ENCODE measurements at regions of chr11 and their contacts with region 1.

Region 1: GRCh38 chr11:5767056-5767455 is 13.0 kb downstream of the OR52N4 start:
- DNase-seq: no peak
- ATAC-seq: no peak
- H3K4me3 ChIP-seq: no peak overlapping the region
- H3K4me3 Mint-ChIP-seq: no peak overlapping the region
- H3K27ac ChIP-seq: no peak overlapping the region
- H3K27ac Mint-ChIP-seq: no peak overlapping the region
- H3K4me1 ChIP-seq: no peaks in the 10 kb centered on the region
- H3K4me1 Mint-ChIP-seq: no peaks in the 10 kb centered on the region
- H3K27me3 ChIP-seq: no peaks in the 10 kb centered on the region
- H3K27me3 Mint-ChIP-seq: no peaks in the 10 kb centered on the region
- CTCF ChIP-seq: no peak

Region 2: DNA sequence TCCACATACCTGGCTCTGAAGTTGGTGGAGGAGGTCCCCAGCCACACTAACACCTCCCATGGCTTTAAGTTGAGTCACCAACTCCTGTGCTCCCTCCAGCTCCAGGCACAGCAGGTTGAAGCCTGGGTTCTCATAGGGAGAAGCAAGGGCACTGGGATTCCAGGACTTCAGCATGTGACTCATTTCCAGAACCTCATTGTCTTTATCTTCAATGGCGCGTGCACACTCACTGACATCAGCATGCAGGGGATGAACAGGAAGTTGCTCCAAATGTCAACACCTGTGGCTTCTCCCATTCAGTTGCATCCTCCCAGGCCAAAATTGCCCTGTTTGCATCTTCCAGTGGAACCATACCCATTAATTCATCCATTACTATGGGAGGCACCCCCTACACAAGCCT is 244.7 kb before region 1 on chr11:
- CTCF ChIA-PET with region 1: no interaction called
- POLR2A ChIA-PET with region 1: no interaction called
- intact Hi-C with region 1: no loop called
- DNase-seq: no peak
- ATAC-seq: no peak
- H3K4me3 ChIP-seq: no peak overlapping the region
- H3K4me3 Mint-ChIP-seq: no peak overlapping the region
- H3K27ac ChIP-seq: no peak overlapping the region
- H3K27ac Mint-ChIP-seq: no peak overlapping the region
- H3K4me1 ChIP-seq: no peaks in the 10 kb centered on the region
- H3K4me1 Mint-ChIP-seq: no peaks in the 10 kb centered on the region
- H3K27me3 ChIP-seq: no peaks in the 10 kb centered on the region
- H3K27me3 Mint-ChIP-seq: no peaks in the 10 kb centered on the region
- CTCF ChIP-seq: no peak

Region 3: DNA sequence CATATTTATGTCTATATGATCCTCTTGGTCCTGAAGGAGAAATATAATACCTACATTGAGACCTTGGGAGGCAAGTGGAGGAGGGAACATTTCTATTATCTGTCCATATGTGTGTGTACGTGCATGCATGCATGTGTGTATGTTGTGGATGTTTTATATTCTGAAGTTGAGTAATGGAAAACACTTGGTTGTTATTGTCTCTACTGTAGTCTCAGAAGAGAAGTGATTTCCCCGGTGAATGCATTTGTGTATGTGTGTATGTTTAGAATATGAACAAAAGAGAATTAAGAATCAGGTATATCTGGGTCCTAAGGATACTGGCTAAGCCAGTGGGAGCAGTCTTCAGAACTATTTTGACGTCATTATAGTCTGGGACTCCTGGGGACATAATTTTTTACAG is 24.1 kb after region 1 on chr11 and contains the start of gene OR52N1:
- CTCF ChIA-PET with region 1: no interaction called
- POLR2A ChIA-PET with region 1: no interaction called
- intact Hi-C with region 1: loop called (anchors 1 kb)
- DNase-seq: no peak
- ATAC-seq: no peak
- H3K4me3 ChIP-seq: no peak within 1 kb of the TSS
- H3K4me3 Mint-ChIP-seq: no peak within 1 kb of the TSS
- H3K27ac ChIP-seq: no peak within 1 kb of the TSS
- H3K27ac Mint-ChIP-seq: no peak within 1 kb of the TSS
- H3K4me1 ChIP-seq: no peaks in the 10 kb centered on the region
- H3K4me1 Mint-ChIP-seq: no peaks in the 10 kb centered on the region
- H3K27me3 ChIP-seq: peaks cover 0 to 2% (median 0%) of the 10 kb centered on the region in 4 experiments
- H3K27me3 Mint-ChIP-seq: peaks cover 18% of the 10 kb centered on the region
- CTCF ChIP-seq: no peak
- total RNA-seq, gene OR52N1: not detected in 2 replicates

Measured in B cell (primary cell).